AG04450 (cell line): ENCODE measurements at regions of chr17 and their contacts with region 1.

Region 1: DNA sequence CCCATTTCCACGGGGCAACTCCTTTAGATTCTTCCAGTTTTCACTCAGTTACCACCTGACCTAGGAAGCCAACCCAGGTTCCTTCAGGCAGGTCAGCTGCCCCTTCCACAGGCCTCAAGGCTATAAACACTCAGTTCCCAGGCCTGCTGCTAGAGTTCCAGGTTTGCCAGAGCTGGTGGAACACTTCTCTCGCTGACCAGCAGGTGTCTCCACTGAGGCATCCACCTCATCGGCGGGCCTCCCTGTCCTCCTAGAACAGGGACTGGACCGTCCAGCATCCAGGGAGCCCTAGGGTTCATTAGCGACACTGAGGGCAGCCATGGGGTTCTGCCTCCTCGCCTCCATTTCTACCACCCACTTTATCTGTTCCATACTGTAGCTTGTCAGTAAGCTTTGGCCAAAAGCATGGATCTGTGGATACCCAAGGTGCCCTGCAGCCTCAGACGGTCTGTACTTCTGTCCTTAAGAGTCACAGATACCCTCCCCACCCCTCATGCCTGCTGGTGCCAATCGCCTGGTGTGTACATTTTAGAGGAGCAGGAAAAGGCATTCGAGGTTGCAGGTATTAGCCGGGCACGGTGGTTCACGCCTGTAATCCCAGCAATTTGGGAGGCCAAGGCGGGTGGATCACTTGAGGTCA is 29.0 kb downstream of the PIMREG start:
- DNase-seq: peak; percentile 33
- H3K4me3 ChIP-seq: no peak overlapping the region
- H3K27ac ChIP-seq: no peak overlapping the region
- H3K27me3 ChIP-seq: no peaks in the 10 kb centered on the region
- CTCF ChIP-seq: peak; percentile 98

Region 2: DNA sequence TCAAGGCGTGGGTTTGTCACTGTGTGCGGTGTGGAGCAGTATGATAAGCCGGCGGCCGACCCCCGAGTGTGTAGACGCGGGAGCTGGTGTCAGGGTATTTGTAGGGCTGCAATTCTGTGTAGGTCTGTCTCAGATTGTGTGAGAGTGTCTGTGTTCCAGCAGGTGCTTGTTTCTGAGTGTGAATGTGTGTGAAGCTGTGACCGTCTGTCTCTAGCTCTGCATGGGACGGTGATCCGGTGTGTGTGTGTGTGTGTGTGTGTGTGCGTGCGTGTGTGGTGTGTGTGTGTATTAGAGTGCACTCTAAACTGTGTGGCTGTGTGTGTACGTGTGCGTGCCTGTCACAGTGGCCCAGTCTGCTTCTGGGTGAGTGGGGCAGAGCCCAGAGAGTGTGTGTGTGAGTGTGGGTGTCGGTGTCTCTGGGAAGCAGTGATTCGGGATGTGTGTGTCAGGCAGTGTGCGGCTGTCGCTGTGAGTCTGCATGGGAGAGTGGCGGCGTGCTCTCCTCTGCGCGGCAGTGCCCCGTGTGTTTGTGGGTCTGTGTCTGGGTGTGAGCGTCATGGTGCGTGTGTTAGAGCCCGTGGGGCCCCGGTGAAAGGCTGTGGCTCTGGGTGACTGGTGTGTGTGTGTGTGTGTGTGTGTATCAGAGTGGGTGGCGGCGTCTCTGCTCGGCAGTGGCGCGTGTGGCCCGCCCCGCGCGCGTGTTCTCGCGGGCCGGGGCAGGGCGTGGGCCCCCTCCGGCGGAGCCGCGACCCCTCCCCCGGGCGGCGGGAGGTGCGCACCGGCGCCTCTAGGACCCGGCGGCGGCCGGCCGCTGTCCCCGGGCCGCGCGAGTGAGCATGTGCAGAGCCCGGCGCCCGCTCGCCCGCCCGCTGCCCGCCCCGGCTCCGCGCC is 403.5 kb before region 1 on chr17 and contains the start of gene WSCD1:
- CTCF ChIA-PET with region 1: no interaction called
- POLR2A ChIA-PET with region 1: no interaction called
- DNase-seq: no peak
- H3K4me3 ChIP-seq: 0 out of 2 replicates have a peak within 1 kb of the TSS, but pooled peaks have one; percentile 10
- H3K27ac ChIP-seq: no peak within 1 kb of the TSS
- H3K27me3 ChIP-seq: peaks cover 30% of the 10 kb centered on the region
- CTCF ChIP-seq: no peak
- polyA plus RNA-seq, gene WSCD1: 0.12 and 0.20 TPM in 2 replicates

Region 3: DNA sequence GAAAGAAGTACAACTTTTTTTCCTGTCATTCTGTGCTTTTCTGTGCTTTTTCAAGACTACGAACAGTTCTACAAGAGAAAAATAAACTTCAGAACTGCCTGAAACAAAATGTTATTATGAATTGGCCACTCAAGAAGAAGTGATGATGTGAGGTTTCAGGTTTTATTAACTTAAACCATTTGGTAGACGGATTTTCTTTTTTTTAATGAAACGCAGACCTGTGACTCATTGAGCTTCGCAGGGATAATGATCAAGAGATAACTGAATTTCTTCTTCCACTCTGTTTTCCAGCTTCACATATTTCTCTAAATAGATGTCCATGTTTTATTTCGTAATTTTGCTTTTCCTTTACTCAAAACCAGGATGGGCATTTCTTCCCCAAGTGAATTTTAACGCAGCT is 71.0 kb before region 1 on chr17:
- CTCF ChIA-PET with region 1: no interaction called
- POLR2A ChIA-PET with region 1: no interaction called
- DNase-seq: no peak
- H3K4me3 ChIP-seq: no peak overlapping the region
- H3K27ac ChIP-seq: no peak overlapping the region
- H3K27me3 ChIP-seq: peaks cover 2% of the 10 kb centered on the region
- CTCF ChIP-seq: no peak

Region 4: DNA sequence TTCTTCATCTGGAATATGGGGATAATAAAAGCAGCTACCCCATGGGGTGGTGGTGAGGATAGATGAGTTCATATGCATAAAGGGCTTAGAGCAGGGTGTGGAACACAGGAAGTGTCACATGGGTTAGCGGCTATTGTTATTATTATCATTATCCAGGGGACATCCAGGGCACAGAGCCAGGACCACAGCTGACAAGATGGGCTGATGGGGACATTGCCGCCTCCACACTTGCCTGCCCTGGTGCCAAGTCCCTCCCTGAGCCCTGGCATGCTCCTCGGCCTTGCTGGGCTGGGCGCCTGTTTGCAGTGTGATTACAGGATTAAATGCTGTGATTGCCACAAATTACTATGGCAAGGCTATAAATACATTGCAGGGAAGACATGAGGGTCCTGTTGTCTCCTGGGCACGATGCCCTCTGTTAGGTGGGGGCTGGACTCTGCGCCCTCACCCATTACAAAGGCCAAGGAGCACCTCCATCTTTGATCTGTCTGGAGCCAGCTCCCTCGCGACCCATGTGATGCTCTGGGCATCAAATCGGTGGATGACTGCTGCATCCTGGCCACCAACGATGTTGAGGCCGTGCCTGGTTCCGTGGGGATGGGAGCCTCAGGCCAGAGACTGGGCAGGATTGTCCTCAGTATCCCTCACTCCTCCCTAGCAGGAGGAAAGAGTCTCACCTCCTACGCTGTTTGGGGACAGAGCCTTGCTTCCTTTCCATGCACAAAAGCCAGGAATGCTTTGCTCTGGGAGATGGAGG is 14.2 kb after region 1 on chr17:
- CTCF ChIA-PET with region 1: interaction called, 11 read pairs
- POLR2A ChIA-PET with region 1: no interaction called
- DNase-seq: no peak
- H3K4me3 ChIP-seq: no peak overlapping the region
- H3K27ac ChIP-seq: no peak overlapping the region
- H3K27me3 ChIP-seq: peaks cover 9% of the 10 kb centered on the region
- CTCF ChIP-seq: no peak

Region 5: GRCh38 chr17:6608321-6608720 is 135.1 kb after region 1 on chr17:
- CTCF ChIA-PET with region 1: interaction called, 14 read pairs
- POLR2A ChIA-PET with region 1: no interaction called
- DNase-seq: no peak
- H3K4me3 ChIP-seq: no peak overlapping the region
- H3K27ac ChIP-seq: no peak overlapping the region
- H3K27me3 ChIP-seq: no peaks in the 10 kb centered on the region
- CTCF ChIP-seq: no peak

Region 6: GRCh38 chr17:6894206-6894528 is 420.9 kb after region 1 on chr17:
- CTCF ChIA-PET with region 1: no interaction called
- POLR2A ChIA-PET with region 1: no interaction called
- DNase-seq: no peak
- H3K4me3 ChIP-seq: no peak overlapping the region
- H3K27ac ChIP-seq: no peak overlapping the region
- H3K27me3 ChIP-seq: peaks cover 34% of the 10 kb centered on the region
- CTCF ChIP-seq: peak; percentile 36

Region 7: GRCh38 chr17:7114875-7115614 is 641.8 kb after region 1 on chr17:
- CTCF ChIA-PET with region 1: no interaction called
- POLR2A ChIA-PET with region 1: no interaction called
- DNase-seq: no peak
- H3K4me3 ChIP-seq: no peak overlapping the region
- H3K27ac ChIP-seq: no peak overlapping the region
- H3K27me3 ChIP-seq: peaks cover 14% of the 10 kb centered on the region
- CTCF ChIP-seq: no peak